Activated B cell treated with CpG ODN at 0.5 μM for 24 hours (primary cell): ENCODE measurements at regions of chr7 and their contacts with region 1.

Region 1: DNA sequence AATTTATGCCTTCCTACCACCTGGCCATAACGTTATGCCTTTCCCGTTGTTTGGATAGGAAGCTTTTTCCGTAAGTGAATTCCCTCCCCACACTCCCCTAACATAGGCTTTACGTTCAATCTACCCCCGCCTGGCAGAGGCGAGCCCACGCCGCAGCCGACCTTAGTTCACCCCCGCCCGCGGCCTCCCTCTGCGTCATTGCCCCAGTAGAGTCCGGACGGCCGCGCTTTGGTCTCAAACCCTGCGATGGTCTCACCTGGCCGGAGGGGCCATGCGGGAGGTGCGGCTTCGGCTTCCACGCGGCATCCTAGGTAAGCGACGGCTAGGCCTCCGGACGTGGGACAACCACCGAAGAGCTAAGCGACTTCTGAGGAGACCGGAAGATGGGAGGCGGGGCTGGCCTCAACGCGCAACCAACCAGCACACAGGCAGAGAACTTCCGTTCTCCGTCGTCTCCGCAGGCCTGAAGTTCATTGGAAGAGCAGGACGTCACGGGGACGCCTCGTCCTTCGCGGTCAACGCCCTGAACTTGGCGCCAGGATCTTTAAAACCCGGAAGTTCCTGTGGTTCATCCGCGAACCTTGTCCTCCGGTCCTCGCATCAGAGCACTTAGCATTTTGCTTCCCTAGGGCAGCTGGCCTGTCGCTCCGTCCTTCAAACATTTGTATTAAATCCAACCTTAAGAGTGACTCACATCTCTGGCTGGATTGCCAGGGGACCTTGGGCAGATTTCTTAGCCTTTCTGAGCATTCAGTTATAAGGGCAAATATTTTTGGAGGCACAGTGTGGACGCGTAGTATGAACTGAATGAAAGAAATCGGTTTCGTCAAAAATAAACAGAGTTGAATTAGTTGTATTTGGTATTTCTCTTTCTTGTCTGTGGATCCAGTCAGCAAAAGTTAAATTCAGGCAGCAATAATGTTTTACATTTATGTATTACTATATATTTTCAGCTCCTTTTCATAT is at the start of gene CHCHD2:
- DNase-seq: peak; percentile 81
- ATAC-seq: peak; percentile 99
- H3K4me3 Mint-ChIP-seq: peak within 1 kb of the TSS; percentile 98
- H3K27ac Mint-ChIP-seq: peak within 1 kb of the TSS; percentile 98
- H3K4me1 Mint-ChIP-seq: peaks cover 37% of the 10 kb centered on the region
- H3K27me3 Mint-ChIP-seq: peaks cover 2% of the 10 kb centered on the region
- CTCF ChIP-seq: no peak
- total RNA-seq, gene CHCHD2: 309 and 350 TPM in 2 replicates

Region 2: GRCh38 chr7:54758702-54759592 is 1347.4 kb before region 1 on chr7 and contains the start of gene SEC61G:
- CTCF ChIA-PET with region 1: no interaction called
- POLR2A ChIA-PET with region 1: interaction called, 9 read pairs
- intact Hi-C with region 1: loop called (anchors 1 kb)
- DNase-seq: peak; percentile 89
- ATAC-seq: peak; percentile 95
- H3K4me3 Mint-ChIP-seq: peak within 1 kb of the TSS; percentile 98
- H3K27ac Mint-ChIP-seq: peak within 1 kb of the TSS; percentile 92
- H3K4me1 Mint-ChIP-seq: peaks cover 21% of the 10 kb centered on the region
- H3K27me3 Mint-ChIP-seq: no peaks in the 10 kb centered on the region
- CTCF ChIP-seq: no peak
- total RNA-seq, gene SEC61G: 57.3 and 65.8 TPM in 2 replicates

Region 3: DNA sequence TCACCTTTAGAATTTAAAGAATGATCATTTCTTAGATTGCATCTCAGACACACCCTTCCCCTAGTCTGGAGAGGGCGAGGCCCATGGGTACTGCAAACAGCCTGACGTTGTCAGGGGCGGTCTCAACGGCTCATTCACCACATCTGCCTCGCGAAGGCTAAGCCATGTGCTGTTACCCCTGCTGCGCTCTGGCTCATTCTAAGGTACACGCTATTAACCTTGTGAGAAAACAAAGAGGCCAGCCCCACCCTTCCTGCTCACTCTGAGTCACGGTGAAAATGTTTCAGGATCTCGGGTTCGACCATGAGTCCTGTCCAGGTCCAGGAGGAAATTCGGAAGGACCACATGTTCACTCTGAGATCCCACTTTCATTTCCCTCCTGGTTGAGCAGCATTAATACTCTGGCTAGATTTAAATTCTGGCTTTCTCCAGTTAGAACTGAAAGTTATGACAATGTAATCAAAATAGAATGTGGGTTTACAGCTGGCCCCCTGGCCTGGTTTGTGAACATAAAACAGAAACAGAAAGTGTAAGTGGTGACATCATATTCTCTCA is 1032.4 kb before region 1 on chr7:
- CTCF ChIA-PET with region 1: no interaction called
- POLR2A ChIA-PET with region 1: no interaction called
- intact Hi-C with region 1: loop called (anchors 5 kb)
- DNase-seq: peak; percentile 27
- ATAC-seq: peak; percentile 86
- H3K4me3 Mint-ChIP-seq: peak overlapping the region; percentile 70
- H3K27ac Mint-ChIP-seq: peak overlapping the region; percentile 73
- H3K4me1 Mint-ChIP-seq: peaks cover 23% of the 10 kb centered on the region
- H3K27me3 Mint-ChIP-seq: peaks cover 5% of the 10 kb centered on the region
- CTCF ChIP-seq: no peak

Region 4: GRCh38 chr7:55887821-55888247 is 218.6 kb before region 1 on chr7:
- CTCF ChIA-PET with region 1: no interaction called
- POLR2A ChIA-PET with region 1: no interaction called
- intact Hi-C with region 1: loop called (anchors 1 kb)
- DNase-seq: no peak
- ATAC-seq: no peak
- H3K4me3 Mint-ChIP-seq: peak overlapping the region; percentile 78
- H3K27ac Mint-ChIP-seq: peak overlapping the region; percentile 60
- H3K4me1 Mint-ChIP-seq: peaks cover 4% of the 10 kb centered on the region
- H3K27me3 Mint-ChIP-seq: no peaks in the 10 kb centered on the region
- CTCF ChIP-seq: no peak

Region 5: DNA sequence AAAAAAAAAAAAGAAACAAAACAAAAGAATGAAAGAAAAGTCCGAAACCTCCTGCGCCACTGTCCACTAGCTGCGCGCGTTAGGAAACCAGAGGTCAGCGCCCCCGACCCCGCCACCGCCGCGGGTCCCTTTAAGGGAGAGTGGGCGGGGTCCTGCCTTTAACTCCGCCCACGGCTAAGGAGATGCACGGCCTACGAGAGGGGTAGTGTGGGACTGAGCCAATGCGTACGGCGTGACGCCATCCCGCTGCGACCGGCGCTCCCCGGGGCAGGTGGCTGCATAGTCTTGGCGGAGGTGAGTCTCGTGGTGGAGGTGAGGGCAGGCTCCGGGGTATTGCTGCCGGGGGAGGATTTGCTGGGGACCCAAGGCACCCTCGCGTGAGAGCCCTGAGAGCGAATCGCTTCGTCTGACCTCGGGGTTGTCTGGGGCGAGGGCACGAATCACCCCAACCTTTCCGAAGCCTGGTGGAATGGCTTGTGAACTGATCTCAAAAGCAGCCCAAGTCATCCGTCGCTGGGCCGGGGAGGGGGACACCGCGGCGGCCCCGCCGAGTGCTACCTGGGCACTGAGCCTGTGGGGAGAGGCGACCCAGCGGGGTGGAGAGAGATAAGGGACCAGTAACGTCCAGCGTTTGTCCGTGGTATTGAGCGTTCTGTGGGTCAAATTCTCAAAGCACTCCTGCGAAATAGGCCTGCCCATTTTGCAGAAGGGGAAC is 154.6 kb before region 1 on chr7 and contains the start of gene MRPS17:
- CTCF ChIA-PET with region 1: no interaction called
- POLR2A ChIA-PET with region 1: no interaction called
- intact Hi-C with region 1: loop called (anchors 1 kb)
- DNase-seq: peak; percentile 84
- ATAC-seq: peak; percentile 100
- H3K4me3 Mint-ChIP-seq: peak within 1 kb of the TSS; percentile 98
- H3K27ac Mint-ChIP-seq: peak within 1 kb of the TSS; percentile 94
- H3K4me1 Mint-ChIP-seq: peaks cover 18% of the 10 kb centered on the region
- H3K27me3 Mint-ChIP-seq: peaks cover 2% of the 10 kb centered on the region
- CTCF ChIP-seq: no peak
- total RNA-seq, gene MRPS17: 16.9 and 20.6 TPM in 2 replicates

Region 6: GRCh38 chr7:56051339-56052191 is 54.8 kb before region 1 on chr7 and contains the starts of genes CCT6A and PSPH:
- CTCF ChIA-PET with region 1: no interaction called
- POLR2A ChIA-PET with region 1: interaction called, 23 read pairs
- intact Hi-C with region 1: loop called (anchors 1 kb)
- DNase-seq: peak; percentile 88
- ATAC-seq: peak; percentile 90
- H3K4me3 Mint-ChIP-seq: peak within 1 kb of the TSS; percentile 88
- H3K27ac Mint-ChIP-seq: peak within 1 kb of the TSS; percentile 88
- H3K4me1 Mint-ChIP-seq: peaks cover 27% of the 10 kb centered on the region
- H3K27me3 Mint-ChIP-seq: no peaks in the 10 kb centered on the region
- CTCF ChIP-seq: no peak
- total RNA-seq, gene CCT6A: 149 and 158 TPM in 2 replicates
- total RNA-seq, gene PSPH: 7.9 and 9.0 TPM in 2 replicates

Region 7: GRCh38 chr7:56063882-56064625 is 42.3 kb before region 1 on chr7 and contains the start of gene SUMF2:
- CTCF ChIA-PET with region 1: no interaction called
- POLR2A ChIA-PET with region 1: interaction called, 36 read pairs
- intact Hi-C with region 1: loop called (anchors 1 kb)
- DNase-seq: peak; percentile 91
- ATAC-seq: peak; percentile 92
- H3K4me3 Mint-ChIP-seq: peak within 1 kb of the TSS; percentile 92
- H3K27ac Mint-ChIP-seq: peak within 1 kb of the TSS; percentile 85
- H3K4me1 Mint-ChIP-seq: peaks cover 32% of the 10 kb centered on the region
- H3K27me3 Mint-ChIP-seq: no peaks in the 10 kb centered on the region
- CTCF ChIP-seq: no peak
- total RNA-seq, gene SUMF2: 91.1 and 103 TPM in 2 replicates

Region 8: DNA sequence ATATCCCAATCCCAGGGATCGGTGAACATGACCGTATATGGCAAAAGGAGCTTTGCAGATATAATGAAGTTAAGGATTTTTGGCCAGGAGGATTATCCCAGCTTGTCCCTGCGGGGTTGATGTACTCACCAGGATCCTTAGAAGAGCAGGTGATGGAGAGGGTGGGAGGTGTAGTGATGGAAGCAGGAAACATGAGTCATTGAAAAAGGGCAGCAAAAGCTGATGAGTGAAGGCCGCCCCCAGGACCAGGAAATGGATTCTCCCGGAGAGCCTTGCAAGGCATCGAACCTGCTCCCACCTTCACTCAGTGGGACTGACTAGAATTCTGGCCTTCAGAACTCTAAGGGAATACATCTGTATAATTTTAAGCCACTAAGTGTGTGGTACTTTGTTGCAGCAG is 15.0 kb after region 1 on chr7:
- CTCF ChIA-PET with region 1: no interaction called
- POLR2A ChIA-PET with region 1: no interaction called
- intact Hi-C with region 1: no loop called
- DNase-seq: no peak
- ATAC-seq: no peak
- H3K4me3 Mint-ChIP-seq: no peak overlapping the region
- H3K27ac Mint-ChIP-seq: no peak overlapping the region
- H3K4me1 Mint-ChIP-seq: no peaks in the 10 kb centered on the region
- H3K27me3 Mint-ChIP-seq: peaks cover 14% of the 10 kb centered on the region
- CTCF ChIP-seq: no peak

Region 9: DNA sequence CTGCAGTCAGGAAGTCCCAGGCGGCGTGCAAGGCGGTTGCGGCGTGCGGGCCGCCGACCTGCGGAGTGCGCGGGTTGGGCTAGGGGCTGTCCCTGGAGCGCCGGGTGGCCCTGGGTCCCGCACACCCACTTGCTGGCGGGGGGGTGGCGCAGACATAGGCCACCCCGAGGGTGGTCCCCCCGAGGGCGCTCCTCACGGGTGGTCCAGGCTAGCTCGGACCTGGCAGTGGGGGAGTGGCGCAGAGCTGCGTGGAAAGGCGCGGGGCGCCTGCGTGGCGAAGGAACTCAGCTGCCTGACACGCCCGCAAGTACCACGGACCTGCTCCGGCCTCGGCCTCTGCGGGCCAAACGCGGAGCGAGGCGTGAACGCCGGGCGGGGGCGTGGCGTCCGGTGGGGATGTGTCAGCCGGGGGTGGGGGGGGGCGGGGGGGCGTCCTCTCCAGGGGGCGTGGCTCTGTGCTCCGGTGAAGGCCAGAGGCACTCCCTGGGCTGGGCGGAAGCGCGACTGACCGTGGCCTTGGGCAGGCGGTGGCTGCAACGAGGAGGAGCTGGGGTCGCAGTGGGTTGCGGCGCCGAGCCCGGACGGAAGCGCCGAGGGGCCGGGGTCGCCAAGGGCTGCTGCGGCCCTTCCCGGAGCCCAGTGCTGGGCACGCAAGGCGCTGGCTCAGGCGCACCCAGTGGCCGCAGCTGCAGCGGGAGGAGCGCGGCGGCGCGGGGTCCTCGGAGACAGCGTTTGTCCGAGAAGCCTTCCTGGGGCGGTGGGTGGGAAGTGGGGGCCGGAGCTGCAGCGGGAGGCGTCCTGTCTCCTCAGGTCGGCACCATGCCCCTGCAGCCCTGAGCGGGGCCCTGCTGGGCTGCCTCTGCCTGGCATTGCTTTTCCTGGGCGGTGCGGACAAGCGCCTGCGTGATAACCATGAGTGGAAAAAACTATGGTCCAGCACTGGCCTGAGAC is 68.7 kb after region 1 on chr7:
- CTCF ChIA-PET with region 1: no interaction called
- POLR2A ChIA-PET with region 1: no interaction called
- intact Hi-C with region 1: no loop called
- DNase-seq: no peak
- ATAC-seq: no peak
- H3K4me3 Mint-ChIP-seq: no peak overlapping the region
- H3K27ac Mint-ChIP-seq: no peak overlapping the region
- H3K4me1 Mint-ChIP-seq: no peaks in the 10 kb centered on the region
- H3K27me3 Mint-ChIP-seq: peaks cover 5% of the 10 kb centered on the region
- CTCF ChIP-seq: no peak